ENCODE measurements at regions of chr1 and their contacts with region 1.

Region 1: GRCh38 chr1:93078986-93079654 is at the start of gene MTF2:
- DNase-seq: peak; percentile 96
- ATAC-seq: peak; percentile 78
- H3K4me3 ChIP-seq: peak within 1 kb of the TSS; percentile 89
- H3K27ac ChIP-seq: peak within 1 kb of the TSS; percentile 40
- H3K4me1 ChIP-seq: peaks cover 12% of the 10 kb centered on the region; the same call in 1 of the 2 replicates
- H3K27me3 ChIP-seq: no peaks in the 10 kb centered on the region
- CTCF ChIP-seq: no peak
- total RNA-seq, gene MTF2: 15.3 and 25.3 TPM in 2 replicates

Region 2: DNA sequence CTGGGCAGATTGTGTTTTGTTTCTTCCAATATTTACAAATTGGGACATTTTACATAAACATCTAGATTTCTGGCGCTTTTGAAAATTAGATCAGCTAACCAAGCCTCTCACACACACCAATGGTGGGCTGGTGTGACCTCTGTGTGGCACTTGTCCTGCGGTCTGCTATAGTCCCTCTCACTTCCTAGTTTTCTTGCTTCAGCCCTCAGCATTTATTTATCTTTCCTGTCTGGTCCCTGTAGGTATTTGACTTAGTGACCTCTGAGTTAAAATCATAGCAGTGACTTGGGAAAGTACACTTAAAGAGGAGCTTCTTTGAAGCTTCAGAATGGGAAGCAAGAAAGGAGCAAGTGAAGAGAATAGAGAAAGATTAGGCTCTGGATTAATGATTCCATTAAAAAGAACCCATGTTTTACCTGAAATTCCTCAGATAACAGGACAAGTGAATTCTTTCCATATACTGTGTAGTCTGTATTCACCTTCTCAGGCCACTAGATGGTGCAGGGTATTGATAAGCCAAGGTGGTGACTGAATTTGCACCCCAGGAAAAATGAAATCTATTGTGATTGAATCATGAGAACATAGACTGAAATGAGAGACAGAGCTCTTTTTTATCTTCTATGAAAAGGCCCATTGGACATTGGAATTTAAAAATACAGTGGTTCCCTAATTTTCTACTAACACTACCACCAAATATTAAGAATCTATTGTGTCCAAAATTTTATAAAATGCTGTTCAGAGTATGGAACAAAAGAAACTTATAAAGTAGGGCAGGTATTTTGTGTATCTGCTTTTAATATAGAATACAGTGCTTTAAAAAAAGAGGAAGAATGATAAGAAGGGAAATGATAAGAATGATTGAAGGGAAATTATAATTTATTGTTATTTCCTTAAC is 110.7 kb before region 1 on chr1:
- CTCF ChIA-PET with region 1: no interaction called
- POLR2A ChIA-PET with region 1: no interaction called
- intact Hi-C with region 1: no loop called
- DNase-seq: peak; percentile 59
- ATAC-seq: peak; percentile 68
- H3K4me3 ChIP-seq: no peak overlapping the region
- H3K27ac ChIP-seq: no peak overlapping the region
- H3K4me1 ChIP-seq: no peaks in the 10 kb centered on the region
- H3K27me3 ChIP-seq: no peaks in the 10 kb centered on the region
- CTCF ChIP-seq: peak; percentile 81

Region 3: DNA sequence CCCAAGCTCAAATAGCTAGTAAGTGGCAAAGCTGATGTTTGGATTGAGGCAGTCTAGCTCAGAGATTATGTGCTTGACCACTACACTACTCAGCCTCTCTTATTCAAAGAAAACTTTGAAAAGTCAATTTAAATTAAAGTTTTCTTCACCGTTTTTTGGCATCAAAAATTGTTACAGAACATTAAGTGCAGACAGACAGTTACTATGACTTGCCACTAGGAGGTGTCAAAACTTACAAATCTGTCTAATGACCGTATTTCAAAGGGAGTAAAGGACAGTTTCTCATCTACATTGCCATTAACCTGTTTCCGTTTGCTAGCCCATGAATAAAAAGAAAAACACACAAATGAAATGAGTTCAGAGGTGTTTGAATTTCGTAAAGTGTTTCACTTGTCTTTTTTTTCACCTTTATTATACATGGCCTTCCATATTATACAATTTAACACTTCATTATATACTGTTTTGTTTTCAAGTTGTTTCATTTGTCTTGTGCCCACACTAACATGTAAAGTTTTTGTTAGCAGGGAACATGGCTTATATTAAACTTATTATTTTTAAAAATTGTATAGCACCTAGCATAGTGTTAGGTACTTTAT is 57.5 kb before region 1 on chr1:
- CTCF ChIA-PET with region 1: no interaction called
- POLR2A ChIA-PET with region 1: no interaction called
- intact Hi-C with region 1: loop called (anchors 5 kb)
- DNase-seq: peak; percentile 69
- ATAC-seq: peak; percentile 56; the same call in 1 of the 2 replicates
- H3K4me3 ChIP-seq: no peak overlapping the region
- H3K27ac ChIP-seq: no peak overlapping the region
- H3K4me1 ChIP-seq: peaks cover 18% of the 10 kb centered on the region
- H3K27me3 ChIP-seq: no peaks in the 10 kb centered on the region
- CTCF ChIP-seq: peak; percentile 89

Region 4: GRCh38 chr1:93114391-93114790 is 35.3 kb after region 1 on chr1:
- CTCF ChIA-PET with region 1: no interaction called
- POLR2A ChIA-PET with region 1: interaction called, 4 read pairs
- intact Hi-C with region 1: loop called (anchors 1 kb)
- DNase-seq: peak; percentile 83
- ATAC-seq: peak; percentile 95
- H3K4me3 ChIP-seq: 0 out of 2 replicates have a peak overlapping the region, but pooled peaks have one; percentile 26
- H3K27ac ChIP-seq: peak overlapping the region; percentile 56
- H3K4me1 ChIP-seq: peaks cover 31% of the 10 kb centered on the region
- H3K27me3 ChIP-seq: no peaks in the 10 kb centered on the region
- CTCF ChIP-seq: no peak

Region 5: DNA sequence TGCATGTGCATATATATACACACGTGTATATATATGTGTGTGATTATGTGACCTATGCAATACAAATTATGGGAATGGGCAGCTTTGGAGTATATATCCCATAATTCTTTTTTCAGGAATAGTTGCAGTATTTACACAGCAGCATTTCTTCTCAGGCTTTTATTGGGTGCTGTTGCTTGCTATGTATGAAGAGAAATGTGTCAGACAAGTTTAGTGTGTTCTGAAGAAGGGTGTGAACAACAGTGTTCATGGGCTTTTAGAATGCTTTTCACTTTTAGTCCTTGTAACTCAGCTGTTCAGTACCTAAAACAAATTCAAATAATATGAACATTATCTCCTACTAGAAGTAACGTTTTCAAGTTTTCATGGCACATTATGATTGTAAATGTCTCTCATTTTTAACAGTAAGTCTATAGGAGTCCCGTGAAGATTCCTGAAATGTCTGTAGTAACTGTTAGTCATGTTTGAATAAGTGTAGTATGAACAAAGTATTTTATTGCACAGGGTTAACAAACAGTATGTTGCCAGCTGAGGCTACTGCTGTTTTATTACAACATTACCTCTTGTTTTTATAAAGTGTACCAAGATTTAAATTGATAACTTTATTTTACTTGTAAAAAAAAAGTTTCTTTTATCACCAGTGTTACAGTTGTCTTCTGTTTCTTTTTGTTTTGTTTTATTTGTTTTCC is 58.6 kb after region 1 on chr1:
- CTCF ChIA-PET with region 1: no interaction called
- POLR2A ChIA-PET with region 1: no interaction called
- intact Hi-C with region 1: loop called (anchors 5 kb)
- DNase-seq: peak; percentile 15
- ATAC-seq: peak; percentile 97
- H3K4me3 ChIP-seq: no peak overlapping the region
- H3K27ac ChIP-seq: peak overlapping the region; percentile 36
- H3K4me1 ChIP-seq: peaks cover 8% of the 10 kb centered on the region; the same call in 1 of the 2 replicates
- H3K27me3 ChIP-seq: no peaks in the 10 kb centered on the region
- CTCF ChIP-seq: no peak

Region 6: GRCh38 chr1:93148001-93148400 is 68.9 kb after region 1 on chr1:
- CTCF ChIA-PET with region 1: interaction called, 3 read pairs
- POLR2A ChIA-PET with region 1: interaction called, 3 read pairs
- intact Hi-C with region 1: loop called (anchors 2 kb)
- DNase-seq: no peak
- ATAC-seq: no peak
- H3K4me3 ChIP-seq: no peak overlapping the region
- H3K27ac ChIP-seq: no peak overlapping the region
- H3K4me1 ChIP-seq: no peaks in the 10 kb centered on the region
- H3K27me3 ChIP-seq: no peaks in the 10 kb centered on the region
- CTCF ChIP-seq: no peak

Region 7: DNA sequence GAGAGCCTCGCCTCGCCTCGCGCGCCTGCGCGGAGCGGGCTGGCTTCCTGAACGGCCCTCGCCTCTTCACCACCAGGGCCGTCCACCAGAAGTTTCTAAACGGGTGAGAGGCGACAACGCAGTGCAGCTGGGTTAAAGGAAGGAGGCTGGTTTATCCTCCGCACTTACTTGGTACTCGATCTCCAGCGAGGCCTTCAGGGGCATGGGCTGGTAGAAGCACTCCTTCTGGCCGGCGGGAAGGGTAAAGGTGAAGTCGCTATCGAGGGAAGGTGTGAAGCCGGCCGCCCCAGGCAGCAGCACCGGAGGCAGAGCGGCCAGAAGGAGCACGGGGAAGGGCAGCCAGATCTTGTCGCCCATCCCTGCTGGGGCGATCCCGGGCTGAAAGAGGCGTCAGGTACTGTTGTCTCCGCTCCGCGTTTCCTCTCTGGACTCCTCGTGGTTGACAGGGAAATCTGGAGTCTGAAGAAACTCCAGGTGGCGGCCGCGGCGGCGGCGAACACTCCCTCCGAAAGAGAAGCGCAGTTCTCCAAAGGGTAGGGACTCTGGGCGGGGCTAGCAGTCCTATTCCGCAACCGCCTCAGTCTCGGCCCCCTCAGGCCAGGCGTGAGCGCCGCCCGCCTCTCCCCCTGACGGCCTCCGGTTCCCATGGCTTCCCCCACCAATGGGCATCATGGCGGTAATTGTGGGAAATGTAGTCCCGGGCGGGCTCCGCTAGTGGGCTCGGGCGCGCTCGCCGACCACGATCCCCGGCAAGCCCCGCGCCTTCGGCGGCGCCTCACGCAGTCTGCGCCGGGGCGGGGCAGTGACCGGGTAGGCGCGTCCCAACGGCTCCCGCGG is 101.0 kb after region 1 on chr1 and contains the start of gene TMED5:
- CTCF ChIA-PET with region 1: no interaction called
- POLR2A ChIA-PET with region 1: interaction called, 7 read pairs
- intact Hi-C with region 1: loop called (anchors 1 kb)
- DNase-seq: peak; percentile 98
- ATAC-seq: peak; percentile 93
- H3K4me3 ChIP-seq: peak within 1 kb of the TSS; percentile 93
- H3K27ac ChIP-seq: peak within 1 kb of the TSS; percentile 98
- H3K4me1 ChIP-seq: peaks cover 22% of the 10 kb centered on the region
- H3K27me3 ChIP-seq: no peaks in the 10 kb centered on the region
- CTCF ChIP-seq: no peak
- total RNA-seq, gene TMED5: 51.6 and 59.2 TPM in 2 replicates

Region 8: DNA sequence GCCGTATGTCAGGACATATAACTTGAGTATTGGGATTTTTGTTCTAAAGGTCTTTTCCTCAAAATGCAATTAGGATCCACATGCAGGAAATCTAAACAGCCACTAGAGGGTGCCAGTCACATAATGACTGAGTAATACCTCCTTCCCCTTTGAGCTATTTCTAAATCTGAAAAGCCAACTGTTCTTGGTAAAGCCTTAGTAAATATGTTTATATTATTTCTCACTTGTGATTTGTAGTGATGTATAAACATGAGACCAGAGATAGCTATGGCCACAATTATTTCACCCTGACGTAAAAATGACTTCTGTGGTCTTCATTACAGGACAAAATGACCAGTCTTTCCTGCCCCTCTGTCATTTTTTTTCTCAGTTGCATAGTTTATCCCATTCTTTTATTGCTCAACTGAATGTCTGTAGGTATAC is 225.6 kb after region 1 on chr1:
- CTCF ChIA-PET with region 1: interaction called, 3 read pairs
- POLR2A ChIA-PET with region 1: no interaction called
- intact Hi-C with region 1: loop called (anchors 1 kb)
- DNase-seq: peak; percentile 86
- ATAC-seq: peak; percentile 75
- H3K4me3 ChIP-seq: no peak overlapping the region
- H3K27ac ChIP-seq: no peak overlapping the region
- H3K4me1 ChIP-seq: no peaks in the 10 kb centered on the region; the same call in 1 of the 2 replicates
- H3K27me3 ChIP-seq: no peaks in the 10 kb centered on the region
- CTCF ChIP-seq: peak; percentile 95

Measured in PC-3 (cell line).